Heart left ventricle (tissue), 16 donors: ENCODE measurements at regions of chr20 and their contacts with region 1.

Region 1: GRCh38 chr20:45347936-45348778 is at the start of gene SDC4:
- DNase-seq: peak; percentile 74 to 85 (median 79)
- ATAC-seq: peak; percentile 34 to 84 (median 77)
- H3K4me3 ChIP-seq: peak within 1 kb of the TSS; percentile 60 to 95 (median 78)
- H3K27ac ChIP-seq: peak within 1 kb of the TSS; percentile 81 to 97 (median 95)
- H3K4me1 ChIP-seq: peaks cover 3 to 54% (median 37%) of the 10 kb centered on the region in 12 donors
- H3K27me3 ChIP-seq: no peaks in the 10 kb centered on the region
- CTCF ChIP-seq: no peak
- POLR2A ChIP-seq: peak; percentile 86 to 98
- total RNA-seq, gene SDC4: 62.1 to 140 (median 94.1) TPM

Region 2: DNA sequence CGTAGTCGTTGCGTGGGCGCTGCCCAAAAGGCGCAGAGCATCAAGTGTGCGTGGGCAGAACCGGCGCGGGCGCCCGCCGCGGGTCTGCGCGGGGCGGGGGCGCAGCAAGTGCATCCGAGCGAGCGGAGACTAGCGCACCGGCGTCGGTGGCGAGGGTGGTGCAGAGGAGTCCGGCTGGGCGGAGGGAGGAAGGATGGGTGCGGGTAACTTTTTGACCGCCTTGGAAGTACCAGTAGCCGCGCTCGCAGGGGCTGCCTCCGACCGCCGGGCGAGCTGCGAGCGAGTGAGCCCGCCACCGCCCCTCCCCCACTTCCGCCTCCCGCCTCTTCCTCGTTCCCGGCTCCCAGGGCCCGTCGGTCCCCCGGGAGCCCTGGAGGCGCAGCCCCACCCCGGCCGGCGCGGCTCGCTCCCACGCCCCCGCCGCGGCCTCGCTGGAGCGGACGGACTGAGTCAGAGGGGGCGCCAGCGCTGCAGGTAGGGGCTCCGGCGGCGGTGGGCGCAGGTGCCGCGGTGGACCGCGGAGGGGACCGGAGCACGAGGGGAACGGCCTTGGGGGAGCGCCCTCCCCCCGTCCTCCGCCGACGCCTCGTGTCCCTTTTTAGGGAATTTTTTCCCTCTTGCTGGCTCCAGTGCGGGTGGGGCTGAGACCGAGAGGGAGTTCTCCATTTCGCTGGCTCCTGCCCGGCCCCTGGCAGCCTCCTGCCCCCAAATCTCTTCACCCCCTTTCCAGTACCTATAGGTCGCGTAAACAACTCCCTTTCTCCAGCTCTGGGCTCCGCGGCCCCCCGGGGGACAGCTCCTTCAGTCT is 58.3 kb after region 1 on chr20:
- intact Hi-C with region 1: loop called in 1 of 10 experiments (anchors 5 kb)
- DNase-seq: peak; percentile 90 to 92 (median 91)
- ATAC-seq: peak; percentile 5 to 67 (median 49)
- H3K4me3 ChIP-seq: peak overlapping the region; percentile 69 to 98 (median 84)
- H3K27ac ChIP-seq: peak overlapping the region; percentile 96 to 100 (median 99)
- H3K4me1 ChIP-seq: peaks cover 0 to 52% (median 30%) of the 10 kb centered on the region in 12 donors
- H3K27me3 ChIP-seq: peaks cover 0 to 5% (median 0%) of the 10 kb centered on the region in 9 donors
- CTCF ChIP-seq: peak in 3 of 12 donors; percentile 24 to 50 (median 44)
- POLR2A ChIP-seq: peak in 1 of 2 donors; percentile 69

Region 3: GRCh38 chr20:45798935-45799642 is 450.9 kb after region 1 on chr20:
- intact Hi-C with region 1: loop called in 1 of 10 experiments (anchors 10 kb)
- DNase-seq: peak in 2 of 5 donors; percentile 55 to 59
- ATAC-seq: peak; percentile 48 to 81 (median 76)
- H3K4me3 ChIP-seq: no peak overlapping the region
- H3K27ac ChIP-seq: no peak overlapping the region
- H3K4me1 ChIP-seq: peaks cover 0 to 17% (median 4%) of the 10 kb centered on the region in 12 donors
- H3K27me3 ChIP-seq: no peaks in the 10 kb centered on the region
- CTCF ChIP-seq: peak; percentile 51 to 77 (median 65)
- POLR2A ChIP-seq: no peak